ENCODE measurements at regions of chr2 and their contacts with region 1.

Region 1: DNA sequence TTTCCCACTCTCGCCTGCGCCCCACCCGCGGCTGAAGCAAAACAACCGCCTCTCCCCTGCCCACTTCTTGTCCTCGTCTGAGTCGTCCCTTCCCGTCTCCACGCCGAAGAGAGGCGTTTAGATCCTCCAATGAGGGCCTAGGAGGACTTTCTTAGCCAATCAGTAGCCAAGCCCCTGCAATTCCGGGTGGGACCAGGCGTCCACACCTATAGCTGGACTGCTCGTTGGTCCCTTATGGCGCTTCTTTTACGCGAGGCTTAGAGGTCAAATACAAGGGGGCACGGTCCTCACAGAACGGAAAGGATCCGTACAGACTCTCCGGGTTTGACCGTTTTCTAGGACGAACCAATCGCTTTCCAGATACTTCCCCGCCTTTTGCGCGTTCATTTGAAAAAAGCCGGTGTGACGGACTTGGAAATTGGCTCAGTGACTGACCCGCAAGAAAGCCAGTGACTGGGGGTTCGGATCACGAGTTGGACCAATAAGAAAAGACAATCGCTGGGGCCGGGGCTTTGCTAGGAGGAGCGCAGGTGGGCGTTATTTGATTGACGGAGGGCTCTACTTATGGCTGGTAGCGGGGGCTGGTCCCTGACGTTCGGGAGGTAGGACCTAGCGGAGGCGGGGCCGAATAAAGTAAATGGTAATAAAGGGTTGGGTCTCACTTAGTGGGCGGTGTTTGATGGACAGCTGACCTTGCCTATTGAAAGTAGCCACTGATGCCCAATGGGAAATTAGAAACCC is 565 bp upstream of the PPM1B start:
- DNase-seq: peak; percentile 100
- ATAC-seq: peak; percentile 92
- H3K4me3 ChIP-seq: peak overlapping the region; percentile 58 to 75 (median 60)
- H3K27ac ChIP-seq: peak overlapping the region; percentile 96
- H3K4me1 ChIP-seq: peaks cover 33% of the 10 kb centered on the region
- H3K27me3 ChIP-seq: no peaks in the 10 kb centered on the region; a peak in 1 of 5 replicates
- CTCF ChIP-seq: no peak
- EP300 ChIP-seq: peak in 1 of 2 experiments; percentile 16; a peak in 2 of 4 replicates
- POLR2A ChIP-seq: peak; percentile 51 to 78
- RAD21 ChIP-seq: no peak

Region 2: DNA sequence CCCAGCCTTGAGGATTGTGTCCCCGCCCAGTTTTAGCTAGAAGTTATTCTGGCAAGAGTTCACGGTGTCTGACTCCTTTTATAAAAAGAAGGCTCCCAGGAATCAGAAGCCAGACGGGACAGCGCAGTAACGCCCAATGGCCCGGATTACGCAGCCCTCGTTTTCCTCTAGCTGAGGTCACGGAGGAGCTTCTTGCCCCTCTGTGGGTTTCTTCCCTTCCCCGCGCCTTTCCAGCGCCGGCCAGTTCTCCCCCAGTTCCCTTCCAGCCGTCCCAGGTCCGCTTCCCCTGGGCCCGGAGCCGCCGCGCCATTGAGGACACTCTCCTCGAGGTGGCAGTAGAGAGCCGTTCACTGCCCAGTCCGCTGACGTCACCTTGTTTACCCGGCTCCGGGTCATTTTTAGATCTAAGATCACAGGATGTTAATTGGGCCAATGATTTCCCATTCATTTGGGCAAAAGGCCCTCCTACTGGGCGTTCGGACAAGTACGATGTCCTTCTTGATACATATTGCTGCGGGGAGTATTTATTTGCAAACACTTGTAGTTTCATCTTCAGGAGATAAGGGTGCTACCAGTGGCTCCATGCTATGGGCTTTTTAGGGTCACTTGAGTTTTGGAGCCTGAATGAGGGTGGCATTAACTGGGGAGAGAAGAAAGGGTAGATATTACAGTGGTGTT is 80.9 kb before region 1 on chr2:
- CTCF ChIA-PET with region 1: no interaction called
- POLR2A ChIA-PET with region 1: interaction called, 11 read pairs
- in situ Hi-C with region 1: no loop called
- intact Hi-C with region 1: loop called (anchors 5 kb)
- DNase-seq: peak; percentile 72
- ATAC-seq: peak; percentile 91
- H3K4me3 ChIP-seq: peak overlapping the region; percentile 55 to 72 (median 61)
- H3K27ac ChIP-seq: no peak overlapping the region
- H3K4me1 ChIP-seq: peaks cover 44% of the 10 kb centered on the region
- H3K27me3 ChIP-seq: peaks cover 0 to 8% of the 10 kb centered on the region in 2 experiments; a peak in 2 of 5 replicates
- CTCF ChIP-seq: peak; percentile 98
- EP300 ChIP-seq: no peak
- POLR2A ChIP-seq: no peak
- RAD21 ChIP-seq: peak; percentile 94

Region 3: DNA sequence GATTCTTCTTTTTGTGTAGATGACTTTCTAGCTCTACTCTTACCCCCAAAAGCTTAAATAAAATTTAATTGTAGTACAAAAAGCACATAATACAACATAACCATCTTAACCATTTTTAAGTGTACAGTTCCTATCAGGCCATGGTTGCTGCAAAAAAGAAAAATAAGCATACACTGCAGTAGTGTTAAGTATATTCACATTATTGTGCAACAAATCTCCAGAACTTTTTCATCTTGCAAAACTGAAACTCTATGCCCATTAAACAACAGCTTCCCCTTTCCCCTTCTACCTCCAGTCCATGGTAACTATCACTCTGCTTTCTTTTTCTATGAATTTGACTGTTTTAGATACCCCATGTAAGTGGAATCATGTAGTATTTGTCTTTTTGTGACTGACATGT is 18.7 kb after region 1 on chr2:
- CTCF ChIA-PET with region 1: no interaction called
- POLR2A ChIA-PET with region 1: interaction called, 12 read pairs
- in situ Hi-C with region 1: no loop called
- intact Hi-C with region 1: no loop called
- DNase-seq: no peak
- ATAC-seq: no peak
- H3K4me3 ChIP-seq: no peak overlapping the region
- H3K27ac ChIP-seq: no peak overlapping the region
- H3K4me1 ChIP-seq: no peaks in the 10 kb centered on the region
- H3K27me3 ChIP-seq: no peaks in the 10 kb centered on the region
- CTCF ChIP-seq: no peak
- EP300 ChIP-seq: no peak
- POLR2A ChIP-seq: no peak
- RAD21 ChIP-seq: no peak

Region 4: DNA sequence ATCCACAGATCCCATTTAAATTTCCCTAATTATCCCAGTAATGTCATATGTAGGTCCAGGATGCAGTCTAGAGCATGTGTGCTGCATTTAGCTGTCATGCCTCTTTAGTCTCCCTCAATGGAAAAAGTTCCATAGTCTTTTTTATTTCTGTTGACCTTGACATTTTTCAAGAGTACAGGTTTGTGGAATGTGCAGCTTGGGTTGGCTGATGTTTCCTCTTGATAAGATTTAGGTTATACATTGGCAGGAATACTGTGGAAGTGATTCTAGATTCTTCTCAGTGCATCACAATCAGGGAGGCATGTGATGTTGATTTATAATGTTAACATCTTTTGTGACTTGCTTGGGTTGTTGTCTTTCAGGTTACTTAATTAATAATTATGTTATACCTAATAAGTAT is 43.1 kb after region 1 on chr2:
- CTCF ChIA-PET with region 1: no interaction called
- POLR2A ChIA-PET with region 1: interaction called, 3 read pairs
- in situ Hi-C with region 1: no loop called
- intact Hi-C with region 1: loop called (anchors 5 kb)
- DNase-seq: peak; percentile 59
- ATAC-seq: peak; percentile 53
- H3K4me3 ChIP-seq: no peak overlapping the region
- H3K27ac ChIP-seq: no peak overlapping the region
- H3K4me1 ChIP-seq: peaks cover 22% of the 10 kb centered on the region
- H3K27me3 ChIP-seq: no peaks in the 10 kb centered on the region
- CTCF ChIP-seq: no peak
- EP300 ChIP-seq: no peak
- POLR2A ChIP-seq: no peak
- RAD21 ChIP-seq: no peak

Region 5: DNA sequence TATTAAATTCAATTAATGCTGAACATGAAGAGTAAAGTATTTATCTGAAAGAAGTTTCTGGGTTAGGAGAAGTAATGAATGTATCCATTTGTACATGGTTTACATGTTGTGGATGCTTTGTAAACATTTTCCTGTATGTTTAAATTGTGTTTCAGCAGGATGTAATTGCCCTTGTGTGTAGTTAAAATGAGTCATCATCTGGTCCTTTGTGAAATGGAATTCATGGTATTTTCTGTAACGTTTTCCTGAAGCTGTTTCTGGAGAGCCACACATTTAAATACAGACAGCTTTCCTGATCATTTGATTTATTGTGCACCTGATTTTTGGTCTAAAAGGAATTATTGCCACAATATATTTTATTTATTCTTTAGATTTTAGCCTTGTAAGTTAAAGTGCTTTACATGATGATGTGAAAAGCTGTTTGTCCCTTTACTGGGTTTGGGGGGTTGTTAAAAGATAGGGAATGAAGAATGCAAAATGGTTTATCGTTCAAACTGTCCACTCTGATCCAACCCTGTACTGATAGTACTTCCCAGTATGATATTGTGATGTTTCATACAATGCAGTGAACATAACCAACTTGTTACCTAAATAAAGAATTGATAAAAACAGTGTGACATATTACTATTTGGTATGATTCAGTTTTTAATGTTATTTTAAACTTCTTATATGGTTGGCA is 65.5 kb after region 1 on chr2:
- CTCF ChIA-PET with region 1: no interaction called
- POLR2A ChIA-PET with region 1: interaction called, 4 read pairs
- in situ Hi-C with region 1: no loop called
- intact Hi-C with region 1: loop called (anchors 5 kb)
- DNase-seq: peak; percentile 79
- ATAC-seq: peak; percentile 81
- H3K4me3 ChIP-seq: no peak overlapping the region
- H3K27ac ChIP-seq: no peak overlapping the region
- H3K4me1 ChIP-seq: peaks cover 13% of the 10 kb centered on the region
- H3K27me3 ChIP-seq: no peaks in the 10 kb centered on the region
- CTCF ChIP-seq: no peak
- EP300 ChIP-seq: peak in 1 of 2 experiments; percentile 46; a peak in 1 of 4 replicates
- POLR2A ChIP-seq: no peak
- RAD21 ChIP-seq: no peak

Region 6: DNA sequence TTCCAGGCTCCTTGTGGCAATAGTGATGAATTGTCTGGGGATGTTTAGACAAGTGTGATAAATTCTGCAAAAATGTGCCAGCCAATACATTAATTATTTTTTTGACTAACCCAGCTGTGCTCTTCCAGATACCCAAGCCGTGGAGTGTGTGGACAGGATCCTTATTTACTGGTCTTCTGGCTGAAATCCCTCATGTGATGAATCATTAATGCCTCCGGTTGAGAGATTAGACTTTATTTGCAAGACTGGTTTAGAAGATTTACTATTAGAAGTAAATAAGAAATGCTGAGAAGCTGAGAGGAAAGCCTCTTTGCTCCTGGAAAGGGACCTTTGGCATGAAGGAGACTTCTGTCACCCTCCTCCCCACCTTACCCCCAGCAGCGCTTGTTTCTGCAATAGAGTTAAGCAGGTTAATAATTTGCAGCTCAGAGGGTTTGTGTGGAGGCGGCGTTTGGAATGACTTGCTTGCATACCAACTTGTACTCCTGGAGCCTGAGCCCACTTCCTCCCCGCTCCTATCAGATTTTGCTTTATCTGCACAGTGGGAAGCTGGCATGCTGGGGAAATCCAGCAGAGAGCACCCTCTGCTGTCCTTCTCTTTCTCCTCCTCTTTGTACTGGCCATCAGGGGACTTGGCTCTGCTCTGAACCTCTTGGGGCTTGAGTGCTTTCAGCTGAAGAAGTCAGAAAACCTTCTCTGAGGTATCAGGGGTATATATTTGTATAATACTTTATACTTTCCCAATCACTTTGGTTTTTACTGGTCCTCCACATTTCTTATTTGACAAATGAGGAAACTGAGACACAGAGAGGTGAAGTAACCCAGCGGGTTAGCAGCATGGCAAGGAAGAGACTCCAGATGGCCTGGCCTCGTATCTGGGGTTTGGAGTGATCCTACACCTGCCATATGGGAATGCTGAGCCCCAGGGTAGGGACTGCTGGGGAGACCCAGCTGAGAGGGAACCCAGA is 123.5 kb after region 1 on chr2:
- CTCF ChIA-PET with region 1: no interaction called
- POLR2A ChIA-PET with region 1: interaction called, 4 read pairs
- in situ Hi-C with region 1: no loop called
- intact Hi-C with region 1: loop called (anchors 10 kb)
- DNase-seq: peak; percentile 95
- ATAC-seq: peak; percentile 98
- H3K4me3 ChIP-seq: peak overlapping the region in 2 of 3 experiments; percentile 12 to 13; a peak in 1 of 6 replicates
- H3K27ac ChIP-seq: no peak overlapping the region
- H3K4me1 ChIP-seq: peaks cover 64% of the 10 kb centered on the region
- H3K27me3 ChIP-seq: peaks cover 2 to 6% of the 10 kb centered on the region in 2 experiments; a peak in 2 of 5 replicates
- CTCF ChIP-seq: peak; percentile 94
- EP300 ChIP-seq: peak in 1 of 2 experiments; percentile 46; a peak in 1 of 4 replicates
- POLR2A ChIP-seq: no peak
- RAD21 ChIP-seq: peak; percentile 95

Region 7: DNA sequence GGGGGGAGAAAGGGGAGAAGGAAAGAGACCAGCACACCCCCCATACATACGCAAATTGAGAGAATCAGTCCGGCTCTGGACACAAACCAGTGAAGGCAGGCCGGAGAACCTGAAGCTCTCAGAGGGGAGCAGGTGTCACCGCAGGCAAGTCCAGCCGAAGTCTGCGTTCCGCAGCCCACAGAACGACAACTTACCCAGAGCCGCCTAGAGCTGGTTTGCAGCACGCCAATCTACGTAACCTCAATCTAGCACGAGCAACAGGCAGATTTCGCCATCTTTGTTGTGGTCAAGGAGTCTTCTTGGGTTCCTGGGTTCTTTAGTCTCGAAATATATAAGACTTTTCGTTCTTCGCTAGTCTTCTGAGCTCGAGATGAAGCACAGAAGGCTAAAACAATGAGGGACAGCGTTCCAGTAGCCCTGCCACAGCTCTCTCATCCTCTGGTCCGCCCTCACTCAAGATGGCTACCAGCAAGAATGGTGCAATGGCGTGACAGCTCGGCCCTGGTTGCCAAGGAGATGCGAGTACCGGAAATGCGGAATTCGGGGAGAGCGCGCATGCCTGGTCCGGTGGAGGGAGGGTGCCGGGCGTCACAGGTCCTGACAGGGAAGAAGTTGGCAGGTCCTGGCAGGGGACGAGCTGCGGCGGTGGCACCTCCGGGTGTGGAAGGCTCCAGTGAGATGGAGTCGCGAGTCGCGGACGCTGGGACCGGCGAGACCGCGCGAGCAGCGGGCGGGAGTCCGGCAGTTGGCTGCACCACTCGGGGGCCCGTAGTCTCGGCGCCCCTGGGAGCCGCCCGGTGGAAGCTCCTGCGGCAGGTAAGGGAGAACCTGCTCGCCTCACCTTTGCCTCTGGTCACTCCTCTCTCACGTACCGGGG is 193.5 kb after region 1 on chr2 and contains the starts of genes CAMKMT and PREPL:
- CTCF ChIA-PET with region 1: no interaction called
- POLR2A ChIA-PET with region 1: interaction called, 21 read pairs
- in situ Hi-C with region 1: no loop called
- intact Hi-C with region 1: loop called (anchors 1 kb)
- DNase-seq: peak; percentile 97
- ATAC-seq: peak; percentile 90
- H3K4me3 ChIP-seq: peak within 1 kb of the TSS; percentile 75 to 95 (median 82)
- H3K27ac ChIP-seq: peak within 1 kb of the TSS; percentile 93
- H3K4me1 ChIP-seq: peaks cover 29% of the 10 kb centered on the region
- H3K27me3 ChIP-seq: no peaks in the 10 kb centered on the region; a peak in 1 of 5 replicates
- CTCF ChIP-seq: peak; percentile 28; the same call in 1 of the 2 replicates
- EP300 ChIP-seq: peak in 1 of 2 experiments; percentile 100; a peak in 2 of 4 replicates
- POLR2A ChIP-seq: peak; percentile 97 to 99
- RAD21 ChIP-seq: peak; percentile 6; the same call in 1 of the 2 replicates
- total RNA-seq, gene CAMKMT: 15.3 and 20.8 TPM in 2 replicates
- total RNA-seq, gene PREPL: 34.3 and 56.1 TPM in 2 replicates

Measured in HepG2 (cell line).